Activated T-helper 1 cell treated with anti-CD3 and anti-CD28 coated beads, Interleukin-12 subunit alpha, Interleukin-12 subunit beta, Interleukin-2, Interleukin-4 antibody, amounts not matched to agents 30 ng/mL and 10 ng/mL and 1 ng/mL, durations not matched to agents 14 hours and 24 hours and 36 hours (primary cell): ENCODE measurements at regions of chr6 and their contacts with region 1.

Region 1: GRCh38 chr6:498795-499231 is 107.3 kb downstream of the IRF4 start:
- DNase-seq: peak; percentile 56
- H3K4me3 Mint-ChIP-seq: peak overlapping the region; percentile 80
- H3K27ac Mint-ChIP-seq: peak overlapping the region; percentile 94
- H3K4me1 Mint-ChIP-seq: peaks cover 87% of the 10 kb centered on the region
- H3K27me3 Mint-ChIP-seq: no peaks in the 10 kb centered on the region

Region 2: DNA sequence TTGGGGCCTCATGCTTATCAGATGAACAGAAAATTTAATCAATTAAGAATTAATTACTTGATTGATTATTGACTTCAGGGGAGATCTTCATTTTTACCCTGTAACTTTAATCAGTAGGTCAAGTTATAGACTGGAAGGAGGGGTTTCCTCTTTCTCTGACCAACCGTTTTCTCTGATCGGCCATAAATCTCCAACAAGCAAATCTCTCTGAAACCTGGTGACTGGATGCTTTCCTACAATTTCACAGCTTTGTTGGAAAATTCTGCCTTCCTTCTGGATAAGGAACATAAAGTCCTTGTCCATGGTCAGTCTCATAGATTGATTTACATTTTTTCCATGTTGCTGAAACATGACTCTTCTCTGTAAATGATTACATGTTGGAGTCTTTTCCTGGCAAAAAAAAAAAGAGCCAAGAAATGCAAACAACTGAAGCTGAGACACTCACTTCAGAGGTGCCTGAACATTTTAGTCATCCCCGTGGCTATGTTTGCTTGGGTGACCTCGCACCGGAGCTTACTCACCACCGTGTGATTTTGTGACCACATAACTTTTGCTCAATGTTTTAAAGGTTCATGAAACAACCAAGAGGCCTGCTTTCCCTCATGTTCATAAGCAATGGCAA is 76.3 kb before region 1 on chr6:
- intact Hi-C with region 1: loop called (anchors 1 kb)
- DNase-seq: peak; percentile 67
- H3K4me3 Mint-ChIP-seq: no peak overlapping the region
- H3K27ac Mint-ChIP-seq: peak overlapping the region; percentile 52
- H3K4me1 Mint-ChIP-seq: peaks cover 39% of the 10 kb centered on the region
- H3K27me3 Mint-ChIP-seq: no peaks in the 10 kb centered on the region

Region 3: GRCh38 chr6:431986-432385 is 66.8 kb before region 1 on chr6:
- intact Hi-C with region 1: loop called (anchors 1 kb)
- DNase-seq: peak; percentile 70
- H3K4me3 Mint-ChIP-seq: peak overlapping the region; percentile 61
- H3K27ac Mint-ChIP-seq: peak overlapping the region; percentile 60
- H3K4me1 Mint-ChIP-seq: peaks cover 85% of the 10 kb centered on the region
- H3K27me3 Mint-ChIP-seq: no peaks in the 10 kb centered on the region

Region 4: DNA sequence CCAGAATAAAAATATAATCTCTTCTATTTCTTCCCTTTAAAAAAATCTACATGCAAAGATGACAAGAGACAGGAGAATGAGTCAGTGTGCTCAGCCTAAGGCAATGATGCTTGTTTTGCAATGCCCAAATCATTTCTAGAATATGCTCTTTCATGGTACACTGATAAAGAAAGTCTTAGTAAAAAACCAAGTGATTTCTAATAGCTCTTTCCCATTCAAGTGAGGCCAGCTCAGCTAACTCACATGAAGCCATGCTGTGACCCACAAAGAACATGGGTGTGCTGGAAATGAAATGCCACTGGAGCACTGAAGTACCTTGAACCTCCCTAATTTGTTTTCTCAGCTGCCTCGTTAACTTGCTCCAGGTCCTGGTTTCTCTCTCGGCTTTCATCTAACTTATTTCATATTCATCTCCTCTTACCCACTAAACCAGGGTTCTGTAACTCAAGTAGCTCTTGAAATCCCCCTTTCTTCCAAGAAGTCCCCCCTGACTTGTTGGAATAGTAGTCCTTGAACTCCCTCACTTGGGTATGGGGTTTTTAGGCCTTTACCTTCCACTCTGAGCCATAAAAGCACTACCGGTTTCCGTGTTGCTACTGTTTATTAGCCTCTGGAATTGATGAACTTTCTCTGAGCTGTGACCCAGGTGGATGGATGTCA is 14.6 kb before region 1 on chr6:
- intact Hi-C with region 1: loop called (anchors 2 kb)
- DNase-seq: no peak
- H3K4me3 Mint-ChIP-seq: peak overlapping the region; percentile 38
- H3K27ac Mint-ChIP-seq: peak overlapping the region; percentile 85
- H3K4me1 Mint-ChIP-seq: peaks cover 65% of the 10 kb centered on the region
- H3K27me3 Mint-ChIP-seq: no peaks in the 10 kb centered on the region

Region 5: DNA sequence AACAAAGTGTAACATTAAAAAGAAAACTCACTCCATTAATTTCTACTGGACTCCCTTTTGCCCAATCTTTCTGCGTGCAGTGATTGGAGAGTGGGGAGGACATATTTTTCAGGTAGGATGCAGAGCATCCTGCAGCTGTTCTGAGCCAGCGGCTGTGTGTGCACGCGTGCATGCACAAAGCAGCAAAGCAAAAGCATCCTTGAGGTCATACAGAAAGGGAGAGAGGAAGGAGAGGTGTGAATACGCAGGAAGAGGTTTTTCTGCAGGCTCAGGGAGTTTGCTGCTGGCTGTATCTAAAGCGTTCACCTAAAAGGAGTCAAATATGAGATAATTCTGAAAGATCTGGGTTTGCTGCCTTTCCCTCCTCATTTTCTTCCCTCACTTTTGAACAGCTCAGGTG is 49.7 kb after region 1 on chr6:
- intact Hi-C with region 1: loop called (anchors 1 kb)
- DNase-seq: peak; percentile 43
- H3K4me3 Mint-ChIP-seq: peak overlapping the region; percentile 72
- H3K27ac Mint-ChIP-seq: peak overlapping the region; percentile 95
- H3K4me1 Mint-ChIP-seq: peaks cover 75% of the 10 kb centered on the region
- H3K27me3 Mint-ChIP-seq: no peaks in the 10 kb centered on the region

Region 6: DNA sequence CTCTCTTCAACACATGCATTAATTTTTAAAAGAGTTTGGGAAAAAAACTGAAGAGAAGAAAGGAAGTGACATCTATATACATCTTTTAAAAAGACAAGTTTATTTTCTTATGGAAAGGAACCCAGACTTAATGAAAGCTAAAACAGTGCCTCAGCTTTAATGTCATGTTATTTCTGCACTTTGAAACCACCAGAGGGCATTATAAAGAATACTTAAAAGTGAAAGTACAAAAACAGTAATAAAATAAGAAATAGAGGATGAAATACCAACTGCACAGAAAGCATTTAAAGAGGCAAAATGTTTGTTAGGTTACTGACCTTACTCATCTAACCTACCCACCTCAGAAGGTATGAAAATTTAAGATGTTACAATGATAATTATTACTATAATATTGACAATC is 59.3 kb after region 1 on chr6:
- intact Hi-C with region 1: loop called (anchors 2 kb)
- DNase-seq: no peak
- H3K4me3 Mint-ChIP-seq: no peak overlapping the region
- H3K27ac Mint-ChIP-seq: peak overlapping the region; percentile 55
- H3K4me1 Mint-ChIP-seq: peaks cover 50% of the 10 kb centered on the region
- H3K27me3 Mint-ChIP-seq: no peaks in the 10 kb centered on the region